ENCODE measurements at regions of chr1 and their contacts with region 1.

Region 1: GRCh38 chr1:66242646-66243547 is 291.1 kb upstream of the SGIP1 start:
- DNase-seq: peak; percentile 41 to 91
- ATAC-seq: peak; percentile 95 to 96
- H3K4me3 ChIP-seq: no peak overlapping the region
- H3K27ac ChIP-seq: peak overlapping the region; percentile 77 to 90
- H3K4me1 ChIP-seq: peaks cover 76% of the 10 kb centered on the region
- CTCF ChIP-seq: peak; percentile 99
- EP300 ChIP-seq: no peak
- POLR2A ChIP-seq: no peak
- RAD21 ChIP-seq: peak; percentile 99 to 100

Region 2: DNA sequence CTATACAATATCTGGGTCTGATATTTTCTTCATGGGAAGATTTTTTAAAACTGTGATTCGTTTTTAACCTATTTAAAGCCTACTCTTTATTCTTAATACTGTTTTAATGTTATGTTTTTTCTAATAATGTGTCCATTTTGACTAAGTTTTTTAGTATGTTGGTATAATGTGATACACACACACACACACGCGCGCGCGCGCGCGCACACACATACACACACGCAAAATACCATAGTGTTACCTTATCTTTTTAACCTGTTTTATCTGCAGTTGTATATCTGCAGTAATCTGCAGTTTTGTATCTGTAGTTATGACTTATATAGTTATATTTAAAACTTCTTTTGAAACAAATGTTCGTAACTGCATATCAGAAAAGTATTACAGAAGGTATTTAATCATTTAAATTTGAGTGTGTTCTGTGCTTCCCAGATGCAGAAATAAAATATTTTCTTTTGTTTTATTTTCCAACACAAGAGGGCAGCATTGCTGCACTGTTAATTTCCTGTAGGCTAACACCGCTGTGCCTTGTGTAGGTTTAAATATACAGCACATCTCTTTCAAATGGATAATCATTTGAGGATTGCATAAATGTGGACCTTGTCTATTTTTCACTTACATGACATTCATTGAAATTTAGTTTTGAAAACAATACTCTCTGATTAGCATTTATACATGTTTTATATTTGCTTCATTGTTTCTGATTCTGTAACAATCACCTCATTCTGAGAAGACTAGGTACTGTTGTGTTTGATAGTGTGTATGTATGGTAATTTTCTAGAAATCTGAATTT is 284.1 kb before region 1 on chr1:
- CTCF ChIA-PET with region 1: interaction called, 128 read pairs
- POLR2A ChIA-PET with region 1: no interaction called
- DNase-seq: peak; percentile 6 to 65
- ATAC-seq: peak; percentile 59 to 82; a peak in 4 of 6 replicates
- H3K4me3 ChIP-seq: no peak overlapping the region
- H3K27ac ChIP-seq: peak overlapping the region; percentile 66 to 79
- H3K4me1 ChIP-seq: peaks cover 36% of the 10 kb centered on the region
- CTCF ChIP-seq: peak; percentile 89
- EP300 ChIP-seq: no peak
- POLR2A ChIP-seq: no peak
- RAD21 ChIP-seq: peak; percentile 95 to 97

Region 3: GRCh38 chr1:66025188-66025587 is 217.7 kb before region 1 on chr1:
- CTCF ChIA-PET with region 1: interaction called, 10 read pairs
- POLR2A ChIA-PET with region 1: no interaction called
- DNase-seq: no peak
- ATAC-seq: no peak
- H3K4me3 ChIP-seq: no peak overlapping the region
- H3K27ac ChIP-seq: no peak overlapping the region
- H3K4me1 ChIP-seq: no peaks in the 10 kb centered on the region
- CTCF ChIP-seq: no peak
- EP300 ChIP-seq: no peak
- POLR2A ChIP-seq: no peak
- RAD21 ChIP-seq: no peak

Region 4: GRCh38 chr1:66217021-66217420 is 25.9 kb before region 1 on chr1:
- CTCF ChIA-PET with region 1: interaction called, 10 read pairs
- POLR2A ChIA-PET with region 1: no interaction called
- DNase-seq: peak; percentile 26 to 64
- ATAC-seq: peak; percentile 77 to 85
- H3K4me3 ChIP-seq: no peak overlapping the region
- H3K27ac ChIP-seq: peak overlapping the region; percentile 35 to 71; a peak in 4 of 6 replicates
- H3K4me1 ChIP-seq: peaks cover 50% of the 10 kb centered on the region
- CTCF ChIP-seq: no peak
- EP300 ChIP-seq: no peak
- POLR2A ChIP-seq: no peak
- RAD21 ChIP-seq: no peak

Region 5: DNA sequence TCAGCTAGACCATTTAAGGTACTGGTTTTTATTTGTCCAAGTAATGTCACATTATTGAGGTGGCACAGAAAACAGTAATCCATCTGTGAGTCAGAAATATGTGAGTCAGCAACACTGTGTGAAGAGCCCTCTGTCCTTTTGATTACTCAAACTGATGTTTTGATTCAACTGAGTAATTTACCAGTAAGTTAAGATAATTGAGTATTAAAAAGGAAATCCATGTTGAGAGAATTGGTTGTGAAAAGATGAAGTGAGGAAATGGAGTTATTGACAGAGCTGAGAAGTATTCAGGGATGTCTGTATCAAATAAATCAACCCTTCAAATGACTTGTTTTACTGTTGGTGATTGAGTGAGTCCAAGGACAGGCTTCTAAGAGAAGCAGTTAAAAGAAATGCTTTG is 11.7 kb before region 1 on chr1:
- CTCF ChIA-PET with region 1: interaction called, 21 read pairs
- POLR2A ChIA-PET with region 1: no interaction called
- DNase-seq: peak; percentile 37 to 74
- ATAC-seq: peak; percentile 88 to 94; a peak in 5 of 6 replicates
- H3K4me3 ChIP-seq: no peak overlapping the region
- H3K27ac ChIP-seq: peak overlapping the region; percentile 80 to 90
- H3K4me1 ChIP-seq: peaks cover 58% of the 10 kb centered on the region
- CTCF ChIP-seq: no peak
- EP300 ChIP-seq: peak in 1 of 2 experiments; percentile 44; a peak in 2 of 5 replicates
- POLR2A ChIP-seq: no peak
- RAD21 ChIP-seq: 0 out of 5 replicates have a peak, but pooled peaks of 1 of the 2 experiments have one; percentile 2

Region 6: GRCh38 chr1:66258404-66259105 is 15.7 kb after region 1 on chr1:
- CTCF ChIA-PET with region 1: interaction called, 38 read pairs
- POLR2A ChIA-PET with region 1: no interaction called
- DNase-seq: peak in 1 of 2 experiments; percentile 52
- ATAC-seq: peak; percentile 63 to 65; a peak in 5 of 6 replicates
- H3K4me3 ChIP-seq: no peak overlapping the region
- H3K27ac ChIP-seq: peak overlapping the region; percentile 81 to 95
- H3K4me1 ChIP-seq: peaks cover 77% of the 10 kb centered on the region
- CTCF ChIP-seq: no peak
- EP300 ChIP-seq: 0 out of 5 replicates have a peak, but pooled peaks of 1 of the 2 experiments have one; percentile 8
- POLR2A ChIP-seq: no peak
- RAD21 ChIP-seq: no peak

Region 7: DNA sequence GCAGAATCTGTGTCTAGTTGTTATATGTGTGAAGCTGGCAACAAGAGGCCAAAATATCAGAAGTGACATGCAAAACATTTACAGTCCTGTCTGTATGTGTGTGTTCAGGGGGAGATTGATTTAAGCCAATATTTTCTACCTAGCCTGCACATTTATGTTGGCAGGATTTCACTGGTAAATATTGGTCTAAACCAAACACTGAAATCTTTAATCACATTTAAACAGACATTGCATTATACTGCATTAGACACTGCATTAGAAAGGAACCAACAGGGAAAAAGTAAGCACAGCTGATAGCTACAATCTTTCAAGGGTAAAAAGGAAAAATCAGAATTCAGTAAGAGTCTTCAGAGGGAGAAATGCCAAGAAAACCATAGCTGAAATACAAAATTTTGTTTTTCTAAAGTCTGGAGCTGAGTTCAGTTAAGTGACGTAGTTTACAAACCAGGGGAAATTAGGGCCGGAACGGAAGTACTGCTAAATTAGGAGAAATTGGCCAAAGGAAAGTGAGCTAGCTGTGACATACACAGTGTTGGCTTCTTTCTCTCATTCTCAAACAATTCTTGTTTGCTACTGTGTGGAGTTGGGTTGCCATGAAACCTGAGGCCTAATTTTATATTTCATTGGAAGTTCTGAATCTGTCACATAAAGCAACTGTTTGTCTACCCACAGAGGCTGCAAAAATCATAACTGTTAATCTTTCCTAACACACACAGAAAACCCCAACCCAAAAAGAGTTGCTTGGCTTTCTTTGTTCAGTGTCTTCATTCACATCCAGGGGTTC is 73.8 kb after region 1 on chr1:
- CTCF ChIA-PET with region 1: no interaction called
- POLR2A ChIA-PET with region 1: no interaction called
- DNase-seq: no peak
- ATAC-seq: no peak
- H3K4me3 ChIP-seq: no peak overlapping the region
- H3K27ac ChIP-seq: peak overlapping the region in 1 of 2 experiments; percentile 40; a peak in 2 of 6 replicates
- H3K4me1 ChIP-seq: peaks cover 30% of the 10 kb centered on the region
- CTCF ChIP-seq: no peak
- EP300 ChIP-seq: no peak
- POLR2A ChIP-seq: no peak
- RAD21 ChIP-seq: no peak

Region 8: DNA sequence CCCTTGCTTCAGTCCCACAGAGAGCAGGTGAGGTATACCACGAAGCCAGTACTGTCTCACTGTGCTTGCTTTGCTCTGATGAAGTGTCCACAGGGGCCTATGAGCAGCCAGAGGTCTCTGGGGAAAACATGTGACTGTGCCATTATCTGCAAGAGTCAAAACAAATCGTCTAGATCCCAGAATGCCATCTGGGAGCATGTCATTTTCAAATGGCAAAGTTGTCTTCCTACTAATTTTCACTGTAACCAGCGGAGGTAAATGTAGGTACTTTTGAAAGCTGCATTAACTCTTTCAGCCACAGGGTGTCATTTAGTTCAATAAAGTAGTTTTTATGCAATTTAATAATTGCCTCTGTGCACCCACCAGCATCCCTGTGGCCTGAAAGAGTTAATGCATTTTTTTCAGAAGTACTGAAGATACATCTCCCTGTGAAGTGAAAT is 117.4 kb after region 1 on chr1:
- CTCF ChIA-PET with region 1: no interaction called
- POLR2A ChIA-PET with region 1: no interaction called
- DNase-seq: no peak
- ATAC-seq: peak; percentile 34 to 66; a peak in 3 of 6 replicates
- H3K4me3 ChIP-seq: no peak overlapping the region
- H3K27ac ChIP-seq: peak overlapping the region in 1 of 2 experiments; percentile 62; a peak in 2 of 6 replicates
- H3K4me1 ChIP-seq: peaks cover 52% of the 10 kb centered on the region
- CTCF ChIP-seq: 0 out of 3 replicates have a peak, but pooled peaks have one; percentile 6
- EP300 ChIP-seq: no peak
- POLR2A ChIP-seq: no peak
- RAD21 ChIP-seq: 0 out of 5 replicates have a peak, but pooled peaks of 1 of the 2 experiments have one; percentile 12